Activated CD4-positive, alpha-beta memory T cell treated with anti-CD3 and anti-CD28 coated beads, Interleukin-2, amount 10 ng/mL, durations not matched to agents 7 days and 5 days (primary cell): ENCODE measurements at regions of chr5 and their contacts with region 1.

Region 1: DNA sequence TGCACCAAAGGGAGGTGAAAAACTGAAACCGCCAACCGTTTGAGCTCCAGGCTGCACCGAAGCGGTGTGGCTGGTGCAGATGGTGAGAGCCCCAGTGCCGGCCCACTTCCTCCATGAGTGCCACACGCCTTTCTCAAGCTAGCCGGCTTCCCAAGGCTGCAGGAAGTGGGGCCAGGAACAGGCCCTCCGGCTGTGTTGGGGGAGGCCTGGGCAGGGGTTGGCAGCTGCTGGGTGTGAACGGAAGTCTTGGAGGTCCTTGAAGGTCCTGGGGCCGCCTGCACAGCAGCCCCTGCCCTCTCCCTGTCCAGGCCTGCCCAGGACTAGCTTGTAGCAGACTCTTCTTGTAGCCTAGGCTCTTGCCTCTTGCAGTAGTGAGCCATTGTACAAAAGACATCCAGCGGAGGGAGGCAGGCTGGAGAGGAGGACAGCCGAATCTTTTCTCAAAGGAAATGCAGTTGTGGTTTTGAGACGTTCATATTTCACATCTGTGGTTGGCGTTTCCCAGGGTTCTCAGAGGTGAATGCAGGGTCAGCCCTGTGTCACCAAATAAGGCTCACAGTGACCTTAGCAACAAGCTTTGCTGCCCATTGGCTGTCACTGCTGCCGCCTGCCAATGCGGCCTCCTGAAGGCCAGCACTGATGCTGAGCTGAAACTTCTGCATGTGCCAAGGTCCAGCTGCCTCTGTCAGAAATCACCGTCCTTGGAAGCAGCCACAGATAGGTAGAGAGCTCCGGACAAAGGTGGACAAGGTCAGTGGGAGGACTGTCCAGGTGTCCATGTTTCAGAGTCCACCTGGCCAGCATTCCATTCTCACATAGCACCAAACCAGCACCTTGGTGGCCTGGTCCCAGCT is 23.9 kb downstream of the IRF1 start:
- DNase-seq: peak; percentile 88
- H3K4me3 Mint-ChIP-seq: peak overlapping the region; percentile 67
- H3K27ac Mint-ChIP-seq: peak overlapping the region; percentile 91
- H3K4me1 Mint-ChIP-seq: peaks cover 95% of the 10 kb centered on the region
- H3K27me3 Mint-ChIP-seq: no peaks in the 10 kb centered on the region

Region 2: GRCh38 chr5:132227485-132228240 is 239.0 kb before region 1 on chr5 and contains the start of gene P4HA2:
- CTCF ChIA-PET with region 1: no interaction called
- POLR2A ChIA-PET with region 1: no interaction called
- DNase-seq: peak; percentile 58
- H3K4me3 Mint-ChIP-seq: peak within 1 kb of the TSS; percentile 37
- H3K27ac Mint-ChIP-seq: no peak within 1 kb of the TSS
- H3K4me1 Mint-ChIP-seq: peaks cover 24% of the 10 kb centered on the region
- H3K27me3 Mint-ChIP-seq: peaks cover 31% of the 10 kb centered on the region
- total RNA-seq, gene P4HA2: 9.7 to 10.5 TPM

Region 3: DNA sequence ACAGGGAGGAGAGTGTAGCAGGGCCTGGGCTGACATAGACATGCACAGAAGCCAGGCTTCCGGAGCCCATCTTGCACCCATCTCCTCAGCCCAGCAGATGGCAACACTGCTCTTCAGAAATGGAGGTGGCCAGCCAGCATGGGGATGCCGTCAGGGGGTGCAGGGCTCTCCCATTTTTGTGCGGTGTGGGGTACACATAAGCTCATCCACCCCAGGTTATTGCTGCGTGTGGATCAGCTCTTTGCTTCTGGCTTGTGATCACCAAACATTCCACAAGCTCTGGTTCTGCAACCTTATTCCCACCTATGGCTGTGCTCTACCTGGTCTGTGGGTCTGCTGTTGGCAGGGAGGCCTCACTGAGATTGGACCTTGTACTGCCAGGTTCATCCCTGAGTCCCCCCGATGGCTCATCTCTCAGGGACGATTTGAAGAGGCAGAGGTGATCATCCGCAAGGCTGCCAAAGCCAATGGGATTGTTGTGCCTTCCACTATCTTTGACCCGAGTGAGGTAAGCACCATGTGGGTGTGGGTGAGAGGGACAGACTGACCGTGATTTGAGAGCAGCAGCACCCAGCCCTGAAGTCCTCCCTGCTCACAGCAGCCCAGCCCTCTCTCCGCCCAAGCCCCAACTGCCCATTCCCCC is 79.9 kb before region 1 on chr5:
- CTCF ChIA-PET with region 1: interaction called, 17 read pairs
- POLR2A ChIA-PET with region 1: interaction called, 4 read pairs
- DNase-seq: peak; percentile 83
- H3K4me3 Mint-ChIP-seq: no peak overlapping the region
- H3K27ac Mint-ChIP-seq: peak overlapping the region; percentile 31
- H3K4me1 Mint-ChIP-seq: peaks cover 52% of the 10 kb centered on the region
- H3K27me3 Mint-ChIP-seq: no peaks in the 10 kb centered on the region

Region 4: DNA sequence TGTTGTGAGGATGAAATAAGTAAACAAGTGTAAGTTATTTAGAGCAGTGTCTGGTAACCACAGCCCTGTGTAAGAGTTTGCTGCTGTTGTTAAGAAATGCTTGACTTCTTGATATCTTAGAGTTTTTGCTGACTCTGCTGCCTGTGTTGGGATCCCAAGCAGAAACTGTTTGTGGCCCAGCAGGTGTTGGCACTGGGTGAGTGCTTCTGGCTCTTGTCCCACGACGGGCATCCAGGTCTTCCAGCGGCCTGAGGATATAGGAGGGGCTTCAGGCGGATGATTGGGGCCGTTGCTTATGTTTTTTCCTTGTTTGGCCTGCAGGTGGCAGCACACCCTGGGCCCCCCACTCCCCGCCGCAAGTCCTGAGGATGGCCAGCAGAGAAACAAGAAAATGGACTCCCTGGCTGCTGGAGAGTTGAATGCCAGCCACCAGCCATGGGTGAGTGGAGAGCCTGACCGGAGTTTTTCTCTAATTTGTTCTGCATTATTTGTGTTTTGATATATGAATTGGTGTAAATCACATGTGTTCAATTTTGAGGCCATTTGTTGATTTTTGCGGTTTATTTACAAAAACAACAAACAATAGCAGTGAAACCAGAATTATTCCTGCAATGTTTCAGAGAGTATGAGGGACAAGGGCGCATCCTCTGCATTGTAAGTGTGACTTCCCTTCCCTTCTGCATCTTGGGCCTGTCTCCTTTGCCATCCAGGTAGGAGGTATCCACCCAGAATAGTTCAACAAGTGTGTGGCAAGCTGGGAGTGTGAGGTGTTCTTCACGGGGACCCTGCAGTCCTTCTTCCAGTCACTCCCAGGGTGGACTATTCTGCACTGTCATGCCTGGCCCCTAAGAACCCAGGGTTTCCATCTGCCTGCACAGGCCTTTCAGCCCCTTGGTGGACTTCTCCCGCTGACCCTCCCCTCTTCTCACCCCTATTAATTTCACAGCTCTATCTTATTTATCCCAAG is 46.9 kb before region 1 on chr5:
- CTCF ChIA-PET with region 1: interaction called, 111 read pairs
- POLR2A ChIA-PET with region 1: interaction called, 1,155 read pairs
- DNase-seq: peak; percentile 72
- H3K4me3 Mint-ChIP-seq: peak overlapping the region; percentile 65
- H3K27ac Mint-ChIP-seq: peak overlapping the region; percentile 91
- H3K4me1 Mint-ChIP-seq: peaks cover 95% of the 10 kb centered on the region
- H3K27me3 Mint-ChIP-seq: no peaks in the 10 kb centered on the region

Region 5: DNA sequence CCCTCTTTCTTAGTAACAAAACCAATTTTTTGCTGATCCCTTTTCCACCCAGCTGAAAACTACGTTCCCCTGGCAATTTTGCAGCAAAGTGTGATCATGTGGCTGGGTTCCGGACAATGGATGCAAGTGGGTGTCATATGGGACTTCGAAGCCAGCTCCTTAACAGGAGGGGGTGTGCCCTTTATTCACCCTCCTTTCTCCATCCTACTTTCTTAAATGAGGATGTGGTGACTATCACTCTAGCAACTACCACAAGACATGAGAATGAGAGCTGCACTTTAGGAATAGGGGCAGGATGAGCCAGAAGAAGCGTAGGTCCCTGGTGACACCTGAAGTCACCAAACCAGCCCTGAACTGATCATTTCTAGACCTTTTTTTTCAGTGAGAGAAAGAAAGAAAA is 35.0 kb before region 1 on chr5:
- CTCF ChIA-PET with region 1: interaction called, 111 read pairs
- POLR2A ChIA-PET with region 1: interaction called, 1,155 read pairs
- DNase-seq: no peak
- H3K4me3 Mint-ChIP-seq: no peak overlapping the region
- H3K27ac Mint-ChIP-seq: peak overlapping the region; percentile 70
- H3K4me1 Mint-ChIP-seq: peaks cover 91% of the 10 kb centered on the region
- H3K27me3 Mint-ChIP-seq: no peaks in the 10 kb centered on the region

Region 6: DNA sequence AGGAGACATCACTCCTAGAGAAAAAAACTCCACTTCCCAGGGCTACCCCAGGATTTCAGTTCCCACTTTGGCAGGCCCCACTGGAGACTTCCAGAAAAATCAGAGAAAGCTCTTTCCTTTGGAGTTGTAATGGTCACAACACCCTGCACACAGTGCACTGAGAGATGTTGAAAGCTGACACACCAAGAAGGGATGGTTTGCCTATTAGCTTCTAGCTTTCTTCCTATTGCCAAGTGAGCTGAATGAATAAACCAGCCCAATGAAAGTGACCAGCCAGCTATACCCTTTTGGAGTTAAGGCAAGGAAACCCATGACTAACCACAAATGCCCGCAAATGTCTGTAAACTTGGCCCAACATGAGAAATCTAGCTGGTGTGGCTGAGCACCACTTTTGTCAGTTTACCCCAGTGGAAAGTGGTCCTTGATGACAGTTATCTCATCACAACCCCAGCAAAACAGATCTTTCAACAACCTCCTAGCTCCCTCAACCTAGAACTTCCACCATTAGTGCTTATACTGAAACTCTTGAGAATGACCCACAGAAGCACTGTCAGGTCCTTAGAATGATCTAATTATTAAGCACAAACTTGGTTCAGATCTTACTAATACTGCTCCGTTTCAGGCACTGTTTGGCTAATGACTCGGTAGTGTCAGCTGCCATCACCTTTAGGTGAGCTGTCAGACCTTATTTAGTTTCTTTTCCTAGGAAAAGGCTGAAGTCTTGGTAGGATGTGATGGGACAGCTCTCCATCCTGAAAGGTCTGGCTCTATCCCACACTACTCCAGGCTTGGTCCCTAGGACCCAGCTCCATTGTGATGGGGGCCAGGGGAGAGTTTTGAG is 12.7 kb after region 1 on chr5:
- CTCF ChIA-PET with region 1: interaction called, 19 read pairs
- POLR2A ChIA-PET with region 1: interaction called, 1,032 read pairs
- DNase-seq: no peak
- H3K4me3 Mint-ChIP-seq: no peak overlapping the region
- H3K27ac Mint-ChIP-seq: peak overlapping the region; percentile 58
- H3K4me1 Mint-ChIP-seq: peaks cover 87% of the 10 kb centered on the region
- H3K27me3 Mint-ChIP-seq: no peaks in the 10 kb centered on the region

Region 7: GRCh38 chr5:132500931-132501630 is 34.4 kb after region 1 on chr5:
- CTCF ChIA-PET with region 1: interaction called, 15 read pairs
- POLR2A ChIA-PET with region 1: interaction called, 1,032 read pairs
- DNase-seq: peak; percentile 78
- H3K4me3 Mint-ChIP-seq: no peak overlapping the region
- H3K27ac Mint-ChIP-seq: no peak overlapping the region
- H3K4me1 Mint-ChIP-seq: peaks cover 39% of the 10 kb centered on the region
- H3K27me3 Mint-ChIP-seq: peaks cover 3% of the 10 kb centered on the region